ENCODE measurements at regions of chr4 and their contacts with region 1.

Region 1: GRCh38 chr4:162497564-162498167 is 333.9 kb upstream of the FSTL5 start:
- DNase-seq: peak; percentile 11
- ATAC-seq: no peak
- H3K4me3 Mint-ChIP-seq: no peak overlapping the region
- H3K27ac Mint-ChIP-seq: no peak overlapping the region
- H3K4me1 Mint-ChIP-seq: no peaks in the 10 kb centered on the region
- H3K27me3 Mint-ChIP-seq: peaks cover 1% of the 10 kb centered on the region

Region 2: DNA sequence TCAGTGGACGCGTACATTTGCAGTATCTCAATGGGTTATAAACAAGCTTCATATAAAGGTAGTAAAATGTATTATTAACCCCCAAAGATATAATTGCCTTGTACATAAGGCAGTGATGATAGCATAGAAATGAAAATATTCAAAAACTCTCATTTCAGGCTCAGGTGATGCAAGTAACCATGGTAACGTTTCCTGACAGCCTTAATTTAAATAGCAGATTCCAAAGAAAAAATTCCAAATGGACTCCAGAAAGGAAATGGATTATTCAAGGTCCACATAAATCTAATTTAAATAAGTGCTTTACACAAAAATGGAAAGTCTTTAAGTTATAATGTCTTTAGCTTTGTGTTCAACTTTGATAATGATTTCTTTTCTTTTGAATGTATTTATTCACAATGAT is 15.1 kb after region 1 on chr4:
- CTCF ChIA-PET with region 1: interaction called, 12 read pairs
- POLR2A ChIA-PET with region 1: no interaction called
- intact Hi-C with region 1: no loop called
- DNase-seq: no peak
- ATAC-seq: no peak
- H3K4me3 Mint-ChIP-seq: no peak overlapping the region
- H3K27ac Mint-ChIP-seq: no peak overlapping the region
- H3K4me1 Mint-ChIP-seq: no peaks in the 10 kb centered on the region
- H3K27me3 Mint-ChIP-seq: no peaks in the 10 kb centered on the region

Region 3: GRCh38 chr4:162791226-162791625 is 293.6 kb after region 1 on chr4:
- CTCF ChIA-PET with region 1: no interaction called
- POLR2A ChIA-PET with region 1: no interaction called
- intact Hi-C with region 1: no loop called
- DNase-seq: no peak
- ATAC-seq: no peak
- H3K4me3 Mint-ChIP-seq: no peak overlapping the region
- H3K27ac Mint-ChIP-seq: no peak overlapping the region
- H3K4me1 Mint-ChIP-seq: no peaks in the 10 kb centered on the region
- H3K27me3 Mint-ChIP-seq: no peaks in the 10 kb centered on the region

Region 4: DNA sequence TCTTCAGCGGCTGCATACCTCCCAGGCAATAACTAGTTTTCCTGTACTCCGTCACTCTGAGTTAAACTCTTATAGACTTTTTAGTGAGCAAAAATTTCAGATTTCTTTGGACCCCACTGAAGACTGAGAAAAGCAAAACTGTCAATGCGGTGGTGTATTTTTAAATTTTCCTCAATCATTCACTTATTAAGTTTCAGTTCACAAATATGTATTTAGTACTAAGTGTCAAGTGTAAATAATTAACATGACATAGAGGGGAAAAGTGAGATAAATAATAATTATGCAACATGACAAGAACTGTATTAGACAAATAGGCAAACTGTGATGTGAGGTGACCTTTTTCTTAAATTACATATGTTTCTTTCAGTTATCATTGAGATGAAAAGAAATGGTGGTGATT is 544.6 kb after region 1 on chr4:
- CTCF ChIA-PET with region 1: no interaction called
- POLR2A ChIA-PET with region 1: no interaction called
- intact Hi-C with region 1: loop called (anchors 1 to 5 kb)
- DNase-seq: no peak
- ATAC-seq: no peak
- H3K4me3 Mint-ChIP-seq: no peak overlapping the region
- H3K27ac Mint-ChIP-seq: no peak overlapping the region
- H3K4me1 Mint-ChIP-seq: no peaks in the 10 kb centered on the region
- H3K27me3 Mint-ChIP-seq: peaks cover 4% of the 10 kb centered on the region

Region 5: DNA sequence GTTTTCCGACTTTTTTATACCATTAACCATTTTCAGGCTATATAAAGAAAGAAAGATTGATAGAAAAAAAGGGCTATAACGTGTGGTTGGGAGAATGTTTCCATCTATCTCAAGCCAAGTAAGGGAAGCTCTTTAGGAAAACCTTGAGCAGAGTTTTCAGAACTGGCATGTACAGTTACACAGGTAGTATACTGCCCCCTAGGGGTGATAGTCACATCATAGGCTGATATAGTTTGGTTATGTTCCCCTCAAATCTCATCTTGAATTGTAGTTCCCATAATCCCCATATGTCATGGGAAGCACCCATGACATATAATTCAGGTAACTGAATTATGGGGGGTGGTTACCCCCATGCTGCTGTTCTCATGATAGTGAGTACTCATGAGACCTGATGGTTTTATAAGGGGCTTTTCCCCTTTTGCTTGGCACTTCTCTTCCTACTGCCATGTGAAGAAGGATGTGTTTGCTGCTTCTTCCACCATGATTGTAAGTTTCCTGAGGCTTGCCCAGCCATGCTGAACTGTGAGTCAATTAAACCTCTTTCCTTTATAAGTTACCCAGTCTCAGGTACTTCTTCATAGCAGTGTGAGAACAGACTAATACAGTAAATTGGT is 1183.6 kb after region 1 on chr4:
- CTCF ChIA-PET with region 1: no interaction called
- POLR2A ChIA-PET with region 1: no interaction called
- intact Hi-C with region 1: loop called (anchors 10 kb)
- DNase-seq: peak; percentile 13
- ATAC-seq: peak; percentile 74
- H3K4me3 Mint-ChIP-seq: no peak overlapping the region
- H3K27ac Mint-ChIP-seq: no peak overlapping the region
- H3K4me1 Mint-ChIP-seq: no peaks in the 10 kb centered on the region
- H3K27me3 Mint-ChIP-seq: no peaks in the 10 kb centered on the region

Measured in activated CD4-positive, alpha-beta T cell treated with anti-CD3 and anti-CD28 coated beads for 36 hours (primary cell).